Sigmoid colon (tissue), 7 donors: ENCODE measurements at regions of chr13 and their contacts with region 1.

Region 1: GRCh38 chr13:76473552-76474134 is 412.6 kb downstream of the KCTD12 start:
- DNase-seq: peak; percentile 82
- H3K4me3 ChIP-seq: no peak overlapping the region
- H3K27ac ChIP-seq: peak overlapping the region in 1 of 4 donors; percentile 29
- H3K4me1 ChIP-seq: peaks cover 0 to 5% (median 0%) of the 10 kb centered on the region in 4 donors
- H3K27me3 ChIP-seq: no peaks in the 10 kb centered on the region
- CTCF ChIP-seq: peak; percentile 85 to 97 (median 88)
- EP300 ChIP-seq: no peak
- POLR2A ChIP-seq: no peak

Region 2: GRCh38 chr13:75691183-75691582 is 782.5 kb before region 1 on chr13:
- intact Hi-C with region 1: loop called (anchors 5 kb)
- DNase-seq: no peak
- H3K4me3 ChIP-seq: no peak overlapping the region
- H3K27ac ChIP-seq: no peak overlapping the region
- H3K4me1 ChIP-seq: no peaks in the 10 kb centered on the region
- H3K27me3 ChIP-seq: no peaks in the 10 kb centered on the region
- CTCF ChIP-seq: no peak
- EP300 ChIP-seq: no peak
- POLR2A ChIP-seq: no peak

Region 3: DNA sequence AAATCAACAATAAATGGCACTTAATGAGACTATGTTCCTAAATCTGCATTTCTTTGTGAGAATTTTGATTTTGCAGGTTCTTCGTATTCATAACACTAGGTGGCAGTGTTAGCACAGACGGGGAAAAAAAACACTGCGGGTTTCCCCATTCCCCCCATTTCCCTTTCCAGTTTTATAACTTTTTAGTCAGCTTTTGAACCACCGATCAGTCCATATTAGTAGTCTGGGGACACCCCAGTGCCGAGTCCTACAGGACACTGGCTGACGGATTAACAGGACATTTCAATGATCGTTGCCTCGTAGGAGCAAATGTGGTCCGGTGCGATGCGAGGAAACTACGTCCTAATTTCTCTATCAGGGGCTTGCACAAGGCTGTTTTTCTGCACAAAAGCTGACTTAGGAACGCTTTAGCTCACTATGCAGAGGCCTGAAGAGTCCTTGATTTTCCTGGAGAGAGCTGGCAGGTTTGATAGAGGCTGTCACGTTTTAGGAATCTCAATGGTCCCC is 603.2 kb before region 1 on chr13:
- intact Hi-C with region 1: loop called (anchors 2 kb)
- DNase-seq: no peak
- H3K4me3 ChIP-seq: peak overlapping the region in 3 of 4 donors; percentile 26 to 32 (median 31)
- H3K27ac ChIP-seq: no peak overlapping the region
- H3K4me1 ChIP-seq: no peaks in the 10 kb centered on the region
- H3K27me3 ChIP-seq: no peaks in the 10 kb centered on the region
- CTCF ChIP-seq: peak; percentile 40 to 82 (median 58)
- EP300 ChIP-seq: no peak
- POLR2A ChIP-seq: no peak

Region 4: DNA sequence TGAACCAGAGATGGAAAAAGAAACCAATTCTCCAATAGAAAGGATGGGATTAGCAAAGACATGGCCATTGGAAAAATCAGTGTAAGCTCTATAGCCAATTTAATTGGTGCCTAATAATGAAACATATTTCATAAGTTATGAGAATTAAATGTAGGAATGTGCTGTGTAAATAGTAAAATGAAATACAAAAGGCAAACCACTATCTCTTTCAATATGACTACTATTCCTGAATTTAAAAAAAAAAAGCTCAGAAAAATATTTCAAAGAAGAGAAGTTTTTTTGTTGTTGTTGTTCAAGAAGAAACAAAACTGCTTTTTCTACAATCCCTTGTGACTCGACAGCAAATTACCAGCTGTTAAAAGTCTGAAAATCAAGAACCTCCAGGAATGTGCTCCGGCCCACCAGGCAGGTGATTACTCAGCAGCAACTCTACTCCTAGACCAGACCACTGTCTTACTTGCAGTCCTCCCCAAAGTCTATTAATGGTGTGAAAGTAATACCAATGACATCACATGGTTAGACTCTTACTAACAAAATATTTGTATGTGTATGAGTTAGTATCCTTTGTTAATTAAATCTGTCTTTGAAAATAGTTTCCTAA is 50.2 kb after region 1 on chr13:
- intact Hi-C with region 1: no loop called
- DNase-seq: no peak
- H3K4me3 ChIP-seq: no peak overlapping the region
- H3K27ac ChIP-seq: no peak overlapping the region
- H3K4me1 ChIP-seq: no peaks in the 10 kb centered on the region
- H3K27me3 ChIP-seq: no peaks in the 10 kb centered on the region
- CTCF ChIP-seq: no peak
- EP300 ChIP-seq: no peak
- POLR2A ChIP-seq: no peak

Region 5: DNA sequence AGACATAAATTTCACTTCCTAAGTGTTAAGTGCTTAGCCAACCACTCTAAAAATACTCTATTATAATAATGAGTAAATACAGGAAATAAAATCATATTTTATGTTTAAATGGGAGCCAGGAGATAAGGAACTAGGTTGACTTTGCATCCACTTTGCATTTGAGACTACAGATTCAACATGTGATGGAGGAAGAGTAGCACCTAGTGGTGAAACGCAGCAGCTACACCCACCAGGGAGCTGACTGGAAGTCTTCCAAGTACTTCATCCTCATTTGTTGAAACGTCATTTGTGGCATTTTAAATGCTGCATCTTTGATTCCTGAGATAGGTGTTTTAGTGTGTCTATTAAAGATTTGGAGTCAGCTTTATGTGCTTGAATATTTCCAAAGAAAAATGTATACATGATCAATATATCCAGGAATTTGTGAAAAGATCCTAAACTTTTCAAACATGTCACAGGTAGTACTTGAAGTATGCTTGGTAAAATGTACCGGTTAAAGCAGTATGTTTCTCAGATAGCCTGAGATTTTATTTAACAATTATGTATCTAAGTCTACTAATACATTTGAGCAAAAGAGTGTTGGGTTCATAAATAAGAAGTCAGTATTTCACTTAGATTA is 430.0 kb after region 1 on chr13:
- intact Hi-C with region 1: loop called (anchors 2 kb)
- DNase-seq: peak; percentile 79
- H3K4me3 ChIP-seq: no peak overlapping the region
- H3K27ac ChIP-seq: no peak overlapping the region
- H3K4me1 ChIP-seq: no peaks in the 10 kb centered on the region
- H3K27me3 ChIP-seq: no peaks in the 10 kb centered on the region
- CTCF ChIP-seq: peak; percentile 84 to 99 (median 95)
- EP300 ChIP-seq: no peak
- POLR2A ChIP-seq: no peak

Region 6: GRCh38 chr13:76980075-76980718 is 506.6 kb after region 1 on chr13:
- intact Hi-C with region 1: loop called (anchors 10 kb)
- DNase-seq: peak; percentile 83
- H3K4me3 ChIP-seq: peak overlapping the region in 3 of 4 donors; percentile 27 to 40 (median 30)
- H3K27ac ChIP-seq: no peak overlapping the region
- H3K4me1 ChIP-seq: peaks cover 0 to 10% (median 8%) of the 10 kb centered on the region in 4 donors
- H3K27me3 ChIP-seq: peaks cover 0 to 10% (median 0%) of the 10 kb centered on the region in 3 donors
- CTCF ChIP-seq: peak; percentile 68 to 98 (median 80)
- EP300 ChIP-seq: no peak
- POLR2A ChIP-seq: no peak

Region 7: DNA sequence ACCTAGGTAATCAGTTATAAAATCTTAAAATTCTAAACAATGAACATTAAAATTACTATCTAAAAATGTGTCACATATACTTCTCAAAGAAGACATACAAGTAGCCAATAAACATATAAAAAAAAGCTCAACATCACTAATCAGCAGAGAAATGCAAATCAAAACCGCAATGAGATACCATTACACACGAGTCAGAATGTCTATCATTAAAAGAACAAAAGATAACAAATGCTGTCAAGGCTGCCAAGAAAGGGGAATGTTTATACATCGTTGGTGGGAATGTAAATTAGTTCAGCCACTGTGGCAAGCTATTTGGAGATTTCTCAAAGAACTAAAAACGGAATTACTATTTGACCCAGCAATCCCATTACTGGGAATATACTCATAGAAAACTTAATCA is 1755.3 kb after region 1 on chr13:
- intact Hi-C with region 1: no loop called
- DNase-seq: no peak
- H3K4me3 ChIP-seq: no peak overlapping the region
- H3K27ac ChIP-seq: no peak overlapping the region
- H3K4me1 ChIP-seq: no peaks in the 10 kb centered on the region
- H3K27me3 ChIP-seq: no peaks in the 10 kb centered on the region
- CTCF ChIP-seq: no peak
- EP300 ChIP-seq: no peak
- POLR2A ChIP-seq: no peak